ENCODE measurements at regions of chr16 and their contacts with region 1.

Region 1: DNA sequence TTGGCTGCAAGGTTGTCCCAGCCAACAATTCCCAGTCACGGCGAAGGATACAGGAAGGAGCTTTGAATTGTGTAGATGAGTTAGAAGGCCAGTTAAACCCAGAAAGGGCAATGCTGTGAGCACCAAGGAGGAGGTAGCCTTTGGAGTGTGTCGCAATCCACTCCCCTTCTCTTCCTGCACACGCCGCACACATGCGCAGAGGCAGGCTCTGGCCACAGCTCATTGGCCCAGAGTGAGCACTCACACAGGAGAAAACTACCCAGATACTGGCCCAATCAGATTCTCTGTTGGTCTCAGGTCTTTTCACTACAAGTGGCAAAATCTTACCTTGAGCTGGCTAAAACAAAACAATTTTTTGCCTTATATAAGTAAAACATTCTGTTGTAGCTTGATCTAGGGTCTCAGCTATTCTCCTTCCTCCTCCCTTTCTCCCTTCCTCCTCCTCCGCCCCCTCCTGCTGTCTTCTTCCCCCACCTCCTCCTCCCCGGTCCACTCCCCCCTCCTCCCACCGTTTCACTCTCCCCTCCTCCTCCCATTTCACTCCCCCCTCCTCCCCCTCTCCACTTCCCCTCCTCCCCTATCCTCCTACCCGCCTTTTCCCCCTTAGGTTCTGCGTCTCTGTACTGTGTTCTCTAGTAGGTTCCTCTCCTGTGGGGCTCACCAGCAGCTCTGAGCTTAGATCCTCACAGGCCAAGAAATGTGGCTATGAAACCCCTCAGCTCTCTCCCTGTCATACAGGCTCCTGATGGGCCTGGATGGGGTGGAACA is 344.9 kb downstream of the CPPED1 start:
- DNase-seq: peak in 1 of 5 donors; percentile 12
- H3K4me3 ChIP-seq: no peak overlapping the region
- H3K27ac ChIP-seq: no peak overlapping the region
- H3K4me1 ChIP-seq: peaks cover 2% of the 10 kb centered on the region
- H3K27me3 ChIP-seq: no peaks in the 10 kb centered on the region
- CTCF ChIP-seq: no peak
- EP300 ChIP-seq: no peak
- POLR2A ChIP-seq: no peak

Region 2: GRCh38 chr16:12439399-12440230 is 19.2 kb before region 1 on chr16:
- intact Hi-C with region 1: loop called in 1 of 4 experiments (anchors 1 kb)
- DNase-seq: no peak
- H3K4me3 ChIP-seq: no peak overlapping the region
- H3K27ac ChIP-seq: no peak overlapping the region
- H3K4me1 ChIP-seq: peaks cover 2% of the 10 kb centered on the region
- H3K27me3 ChIP-seq: no peaks in the 10 kb centered on the region
- CTCF ChIP-seq: no peak
- EP300 ChIP-seq: no peak
- POLR2A ChIP-seq: no peak

Region 3: DNA sequence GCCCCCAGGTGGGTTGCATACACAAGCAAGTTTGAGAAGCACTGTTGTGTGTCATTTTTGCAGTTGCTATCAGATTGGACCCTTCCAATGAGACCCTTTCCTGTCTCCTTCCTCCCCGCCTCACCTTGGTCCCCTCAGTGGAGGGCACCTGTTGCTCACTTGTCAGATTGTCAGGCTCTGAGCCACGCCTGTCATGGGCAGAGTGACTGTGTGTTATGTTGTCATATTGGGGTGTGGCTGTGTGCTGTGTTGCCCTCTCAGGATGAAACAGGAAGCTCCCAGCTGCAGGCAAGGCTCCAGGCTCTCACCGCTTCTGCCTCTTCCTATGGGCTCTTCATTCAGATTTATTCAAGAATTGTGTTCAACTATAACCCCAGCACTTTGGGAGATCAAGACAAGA is 42.0 kb after region 1 on chr16:
- intact Hi-C with region 1: no loop called
- DNase-seq: no peak
- H3K4me3 ChIP-seq: no peak overlapping the region
- H3K27ac ChIP-seq: no peak overlapping the region
- H3K4me1 ChIP-seq: no peaks in the 10 kb centered on the region
- H3K27me3 ChIP-seq: no peaks in the 10 kb centered on the region
- CTCF ChIP-seq: no peak
- EP300 ChIP-seq: no peak
- POLR2A ChIP-seq: no peak

Measured in ovary (tissue), 10 donors.